ENCODE measurements at regions of chr5 and their contacts with region 1.

Region 1: GRCh38 chr5:36264202-36264760 is 22.6 kb upstream of the NADK2 start:
- DNase-seq: no peak
- ATAC-seq: no peak
- H3K4me3 ChIP-seq: no peak overlapping the region
- H3K27ac ChIP-seq: no peak overlapping the region
- H3K4me1 ChIP-seq: no peaks in the 10 kb centered on the region
- H3K27me3 ChIP-seq: no peaks in the 10 kb centered on the region
- CTCF ChIP-seq: no peak
- EP300 ChIP-seq: no peak
- POLR2A ChIP-seq: no peak
- RAD21 ChIP-seq: no peak

Region 2: DNA sequence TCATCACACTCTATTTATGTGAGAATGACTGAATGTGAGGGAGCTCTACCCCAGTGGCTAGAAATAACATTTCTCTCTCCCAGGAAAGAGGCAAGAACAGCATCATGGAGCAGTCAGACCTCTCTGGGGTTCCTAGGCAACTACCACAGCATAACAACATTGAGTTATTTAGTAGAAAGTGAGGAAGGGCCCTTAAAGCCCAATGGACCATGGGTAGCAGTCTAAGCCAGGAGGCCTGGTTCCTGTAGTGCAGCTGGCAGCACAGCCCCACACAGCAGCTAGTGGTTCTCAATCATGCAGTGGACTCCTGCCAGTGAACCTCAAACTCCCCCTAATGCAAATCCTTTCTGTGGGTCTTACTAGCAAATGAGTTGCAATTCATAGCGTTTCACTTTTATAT is 591.3 kb before region 1 on chr5:
- CTCF ChIA-PET with region 1: no interaction called
- POLR2A ChIA-PET with region 1: no interaction called
- RAD21 ChIA-PET with region 1: no interaction called
- SMC1A ChIA-PET with region 1: no interaction called
- in situ Hi-C with region 1: no loop called
- intact Hi-C with region 1: no loop called
- DNase-seq: no peak
- ATAC-seq: peak; percentile 89
- H3K4me3 ChIP-seq: no peak overlapping the region
- H3K27ac ChIP-seq: no peak overlapping the region
- H3K4me1 ChIP-seq: no peaks in the 10 kb centered on the region
- H3K27me3 ChIP-seq: no peaks in the 10 kb centered on the region
- CTCF ChIP-seq: no peak
- EP300 ChIP-seq: no peak
- POLR2A ChIP-seq: no peak
- RAD21 ChIP-seq: no peak

Region 3: GRCh38 chr5:36214434-36214833 is 49.8 kb before region 1 on chr5:
- CTCF ChIA-PET with region 1: interaction called, 12 read pairs
- POLR2A ChIA-PET with region 1: no interaction called
- RAD21 ChIA-PET with region 1: no interaction called
- SMC1A ChIA-PET with region 1: interaction called, 3 read pairs
- in situ Hi-C with region 1: no loop called
- intact Hi-C with region 1: no loop called
- DNase-seq: no peak
- ATAC-seq: no peak
- H3K4me3 ChIP-seq: no peak overlapping the region
- H3K27ac ChIP-seq: no peak overlapping the region
- H3K4me1 ChIP-seq: no peaks in the 10 kb centered on the region
- H3K27me3 ChIP-seq: no peaks in the 10 kb centered on the region
- CTCF ChIP-seq: peak in 2 of 3 experiments; percentile 14 to 24; a peak in 2 of 6 replicates
- EP300 ChIP-seq: no peak
- POLR2A ChIP-seq: no peak
- RAD21 ChIP-seq: peak; percentile 42

Region 4: DNA sequence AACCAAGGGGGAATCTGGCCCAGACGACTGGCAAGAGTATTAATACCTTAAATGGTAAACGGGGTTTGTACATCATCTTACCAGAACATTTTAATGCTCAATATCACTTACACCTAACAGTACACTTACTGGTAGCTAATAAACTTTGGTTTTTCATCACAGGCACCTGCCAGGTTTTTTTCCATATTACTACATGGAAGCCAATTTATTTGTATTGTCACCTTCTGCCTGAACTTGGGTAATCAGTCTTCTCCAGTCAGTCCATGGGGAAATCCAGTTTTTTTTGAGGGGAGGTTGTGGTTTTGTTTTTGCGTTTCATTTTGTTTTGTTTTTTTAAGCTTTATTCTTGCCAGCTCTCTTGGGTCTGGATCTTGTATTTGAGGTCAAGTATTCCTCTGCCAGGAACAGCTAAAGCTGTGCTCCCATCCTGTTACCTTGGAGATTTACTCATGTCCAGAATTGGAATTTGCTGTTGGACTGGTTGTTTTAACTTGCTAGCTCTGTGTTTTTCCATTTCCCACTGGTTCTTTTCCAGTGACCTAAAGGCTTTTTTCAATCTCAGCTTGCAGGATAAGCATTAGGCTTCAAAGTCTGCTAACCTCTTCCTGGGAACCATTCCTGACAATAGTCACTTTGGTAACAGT is 11.4 kb before region 1 on chr5:
- CTCF ChIA-PET with region 1: interaction called, 47 read pairs
- POLR2A ChIA-PET with region 1: no interaction called
- RAD21 ChIA-PET with region 1: interaction called, 3 read pairs
- SMC1A ChIA-PET with region 1: interaction called, 11 read pairs
- in situ Hi-C with region 1: no loop called
- intact Hi-C with region 1: no loop called
- DNase-seq: no peak
- ATAC-seq: no peak
- H3K4me3 ChIP-seq: no peak overlapping the region
- H3K27ac ChIP-seq: no peak overlapping the region
- H3K4me1 ChIP-seq: no peaks in the 10 kb centered on the region
- H3K27me3 ChIP-seq: no peaks in the 10 kb centered on the region
- CTCF ChIP-seq: no peak
- EP300 ChIP-seq: no peak
- POLR2A ChIP-seq: no peak
- RAD21 ChIP-seq: no peak

Region 5: DNA sequence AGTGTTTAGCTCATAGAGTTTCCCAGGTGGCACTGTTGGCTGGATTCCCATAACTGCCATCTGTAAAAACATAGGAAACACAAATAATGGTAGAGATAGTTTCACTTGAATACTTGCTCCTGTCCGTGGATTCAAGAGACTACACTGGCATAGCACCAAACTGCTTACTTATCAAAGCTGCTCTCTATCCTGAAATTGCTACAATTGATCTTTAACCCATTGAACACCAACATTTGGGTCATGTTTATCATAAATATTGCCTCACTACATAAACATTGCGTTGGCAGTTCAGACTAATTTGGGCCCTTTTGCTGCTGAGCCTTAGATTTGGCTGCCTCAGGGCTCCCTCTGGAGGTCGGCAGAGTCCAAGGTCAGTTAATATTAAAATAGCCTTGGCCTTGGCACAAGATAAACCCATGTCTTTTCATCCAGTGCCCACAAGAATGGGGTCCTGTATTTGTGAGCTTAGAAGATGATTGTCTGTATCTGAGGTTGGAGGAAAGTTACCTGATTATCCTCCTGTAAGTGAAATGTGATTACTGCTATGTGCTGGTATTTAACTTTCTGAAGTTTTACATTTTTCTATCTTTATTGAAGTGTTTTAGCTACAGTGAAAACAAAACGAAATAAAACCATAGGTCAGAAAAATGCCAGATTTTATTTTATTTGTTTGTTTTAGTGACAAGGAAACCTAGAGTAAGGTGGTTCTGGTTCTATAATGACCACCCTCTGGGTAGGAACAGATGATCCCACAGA is 41.5 kb after region 1 on chr5:
- CTCF ChIA-PET with region 1: interaction called, 79 read pairs
- POLR2A ChIA-PET with region 1: interaction called, 3 read pairs
- RAD21 ChIA-PET with region 1: interaction called, 8 read pairs
- SMC1A ChIA-PET with region 1: interaction called, 5 read pairs
- in situ Hi-C with region 1: no loop called
- intact Hi-C with region 1: loop called (anchors 1 kb)
- DNase-seq: no peak
- ATAC-seq: peak; percentile 89
- H3K4me3 ChIP-seq: no peak overlapping the region
- H3K27ac ChIP-seq: no peak overlapping the region
- H3K4me1 ChIP-seq: no peaks in the 10 kb centered on the region
- H3K27me3 ChIP-seq: peaks cover 0 to 3% of the 10 kb centered on the region in 2 experiments; a peak in 1 of 4 replicates
- CTCF ChIP-seq: peak; percentile 61 to 83 (median 74)
- EP300 ChIP-seq: no peak
- POLR2A ChIP-seq: no peak
- RAD21 ChIP-seq: peak; percentile 82

Region 6: DNA sequence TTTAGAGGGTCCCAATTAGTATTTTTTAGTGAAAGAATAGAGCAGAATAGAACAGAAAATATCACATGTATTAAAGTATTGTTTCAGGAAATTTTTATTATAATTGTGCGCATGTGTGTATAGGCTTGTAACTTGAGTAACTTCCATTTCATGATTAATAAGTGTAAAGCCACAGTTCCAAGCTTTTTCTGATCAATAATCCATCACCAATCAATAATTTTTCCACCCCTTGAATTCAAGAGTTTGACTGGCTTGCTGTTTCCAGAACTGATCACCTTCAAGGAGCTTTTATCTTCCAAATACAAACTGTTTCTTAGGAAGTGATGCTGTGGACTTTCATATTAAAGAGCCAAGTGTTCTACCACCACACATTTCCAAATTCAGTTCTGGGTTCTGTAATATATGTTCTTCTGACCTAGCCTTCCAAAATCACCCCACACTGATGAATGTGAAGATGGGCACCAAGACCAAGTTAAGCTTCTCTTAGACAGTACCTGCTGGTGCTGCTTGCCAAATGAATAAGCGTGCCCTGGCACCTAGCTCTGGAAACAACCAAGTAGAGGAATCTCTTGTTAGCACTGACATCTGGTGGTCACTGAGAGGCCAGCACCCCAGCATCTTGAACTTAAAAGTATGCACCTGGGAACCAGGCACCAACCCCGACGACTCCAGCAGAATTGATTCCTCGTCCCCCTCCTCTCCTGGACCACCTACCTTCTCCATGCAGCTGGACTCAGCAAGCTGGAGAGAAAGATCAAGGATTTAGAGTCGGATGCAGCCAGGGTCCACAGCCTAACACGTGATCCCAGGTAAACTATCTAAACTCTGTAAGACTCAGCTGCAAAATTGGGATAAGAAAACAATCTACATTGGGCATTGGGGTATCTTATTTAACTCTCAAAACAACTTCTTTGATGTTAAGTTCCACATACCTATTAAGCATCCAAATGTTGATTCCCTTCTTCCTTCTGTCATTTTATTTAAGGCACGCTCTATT is 431.7 kb after region 1 on chr5:
- CTCF ChIA-PET with region 1: interaction called, 14 read pairs
- POLR2A ChIA-PET with region 1: no interaction called
- RAD21 ChIA-PET with region 1: interaction called, 3 read pairs
- SMC1A ChIA-PET with region 1: interaction called, 6 read pairs
- in situ Hi-C with region 1: no loop called
- intact Hi-C with region 1: loop called (anchors 1 kb)
- DNase-seq: no peak
- ATAC-seq: peak; percentile 76
- H3K4me3 ChIP-seq: no peak overlapping the region
- H3K27ac ChIP-seq: no peak overlapping the region
- H3K4me1 ChIP-seq: peaks cover 13% of the 10 kb centered on the region
- H3K27me3 ChIP-seq: no peaks in the 10 kb centered on the region
- CTCF ChIP-seq: peak; percentile 72 to 82 (median 77)
- EP300 ChIP-seq: no peak
- POLR2A ChIP-seq: no peak
- RAD21 ChIP-seq: peak; percentile 52; the same call in 1 of the 2 replicates

Measured in GM12878 (cell line).